Heart right ventricle (tissue), 16 donors: ENCODE measurements at regions of chr2 and their contacts with region 1.

Region 1: GRCh38 chr2:29817801-29818680 is 103.3 kb downstream of the ALK start:
- DNase-seq: no peak
- ATAC-seq: no peak
- H3K4me3 ChIP-seq: no peak overlapping the region
- H3K27ac ChIP-seq: no peak overlapping the region
- H3K4me1 ChIP-seq: no peaks in the 10 kb centered on the region
- H3K27me3 ChIP-seq: peaks cover 0 to 8% (median 0%) of the 10 kb centered on the region in 7 donors
- CTCF ChIP-seq: no peak

Region 2: GRCh38 chr2:28544919-28545589 is 1273.0 kb before region 1 on chr2:
- intact Hi-C with region 1: no loop called
- DNase-seq: no peak
- ATAC-seq: peak in 2 of 8 donors; percentile 37 to 57
- H3K4me3 ChIP-seq: no peak overlapping the region
- H3K27ac ChIP-seq: peak overlapping the region in 1 of 10 donors; percentile 16
- H3K4me1 ChIP-seq: peaks cover 0 to 13% (median 0%) of the 10 kb centered on the region in 9 donors
- H3K27me3 ChIP-seq: peaks cover 0 to 5% (median 0%) of the 10 kb centered on the region in 7 donors
- CTCF ChIP-seq: no peak

Region 3: GRCh38 chr2:29855924-29856639 is 38.0 kb after region 1 on chr2:
- intact Hi-C with region 1: loop called in 1 of 10 experiments (anchors 2 kb)
- DNase-seq: no peak
- ATAC-seq: no peak
- H3K4me3 ChIP-seq: no peak overlapping the region
- H3K27ac ChIP-seq: no peak overlapping the region
- H3K4me1 ChIP-seq: no peaks in the 10 kb centered on the region
- H3K27me3 ChIP-seq: peaks cover 0 to 26% (median 5%) of the 10 kb centered on the region in 7 donors
- CTCF ChIP-seq: no peak

Region 4: GRCh38 chr2:30026087-30027055 is 208.3 kb after region 1 on chr2:
- intact Hi-C with region 1: loop called in 1 of 10 experiments (anchors 5 kb)
- DNase-seq: peak; percentile 25 to 34
- ATAC-seq: peak; percentile 61 to 84 (median 73)
- H3K4me3 ChIP-seq: no peak overlapping the region
- H3K27ac ChIP-seq: no peak overlapping the region
- H3K4me1 ChIP-seq: no peaks in the 10 kb centered on the region
- H3K27me3 ChIP-seq: peaks cover 0 to 58% (median 21%) of the 10 kb centered on the region in 7 donors
- CTCF ChIP-seq: peak; percentile 30 to 75 (median 64)

Region 5: GRCh38 chr2:30385327-30385726 is 567.3 kb after region 1 on chr2:
- intact Hi-C with region 1: no loop called
- DNase-seq: no peak
- ATAC-seq: peak in 5 of 8 donors; percentile 55 to 74 (median 69)
- H3K4me3 ChIP-seq: no peak overlapping the region
- H3K27ac ChIP-seq: no peak overlapping the region
- H3K4me1 ChIP-seq: no peaks in the 10 kb centered on the region
- H3K27me3 ChIP-seq: no peaks in the 10 kb centered on the region
- CTCF ChIP-seq: no peak